HepG2 (cell line): ENCODE measurements at regions of chr5 and their contacts with region 1.

Region 1: DNA sequence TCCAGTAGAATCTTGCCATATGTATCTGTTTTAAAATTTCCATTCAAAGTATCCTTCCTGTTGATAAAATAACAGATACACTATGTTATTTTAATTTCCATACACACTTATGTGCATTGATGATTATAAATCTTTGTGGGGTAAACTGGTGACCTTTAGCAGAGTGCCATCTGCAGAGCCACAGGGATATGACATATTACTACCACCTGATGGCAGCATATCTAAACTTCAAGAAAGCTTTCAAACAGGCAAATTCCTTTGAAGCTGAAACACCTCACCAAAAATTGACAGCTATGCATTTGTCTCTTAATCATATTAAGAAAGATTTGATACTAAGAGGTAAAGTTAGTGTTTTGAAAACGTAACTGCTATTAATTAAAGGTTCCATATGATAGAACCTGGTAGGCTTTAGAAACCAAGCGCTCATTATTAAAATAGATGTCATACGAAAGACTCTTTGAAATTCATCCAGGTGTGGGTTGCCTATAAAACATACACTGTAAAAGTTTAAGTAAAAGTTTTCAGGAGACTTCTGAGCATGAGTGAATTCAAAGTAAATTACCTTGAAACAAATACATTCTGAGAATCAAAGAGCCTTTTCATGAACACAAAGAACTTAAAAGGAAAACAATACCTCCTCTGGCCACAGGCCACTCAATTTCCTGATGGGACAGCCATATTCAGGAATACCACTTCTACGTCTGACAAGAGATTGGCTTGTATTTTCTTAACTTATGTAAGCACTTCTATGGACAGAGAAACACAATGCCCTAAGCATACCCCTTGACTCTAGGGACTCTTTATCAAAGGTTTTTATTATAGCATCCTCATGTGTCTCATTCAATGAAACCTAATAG is 93.3 kb downstream of the KIAA0825 start:
- DNase-seq: peak; percentile 47
- ATAC-seq: peak; percentile 85
- H3K4me3 ChIP-seq: no peak overlapping the region
- H3K27ac ChIP-seq: no peak overlapping the region
- H3K4me1 ChIP-seq: no peaks in the 10 kb centered on the region
- H3K27me3 ChIP-seq: no peaks in the 10 kb centered on the region
- CTCF ChIP-seq: peak; percentile 72
- EP300 ChIP-seq: no peak
- POLR2A ChIP-seq: no peak
- RAD21 ChIP-seq: peak; percentile 52; the same call in 1 of the 2 replicates

Region 2: DNA sequence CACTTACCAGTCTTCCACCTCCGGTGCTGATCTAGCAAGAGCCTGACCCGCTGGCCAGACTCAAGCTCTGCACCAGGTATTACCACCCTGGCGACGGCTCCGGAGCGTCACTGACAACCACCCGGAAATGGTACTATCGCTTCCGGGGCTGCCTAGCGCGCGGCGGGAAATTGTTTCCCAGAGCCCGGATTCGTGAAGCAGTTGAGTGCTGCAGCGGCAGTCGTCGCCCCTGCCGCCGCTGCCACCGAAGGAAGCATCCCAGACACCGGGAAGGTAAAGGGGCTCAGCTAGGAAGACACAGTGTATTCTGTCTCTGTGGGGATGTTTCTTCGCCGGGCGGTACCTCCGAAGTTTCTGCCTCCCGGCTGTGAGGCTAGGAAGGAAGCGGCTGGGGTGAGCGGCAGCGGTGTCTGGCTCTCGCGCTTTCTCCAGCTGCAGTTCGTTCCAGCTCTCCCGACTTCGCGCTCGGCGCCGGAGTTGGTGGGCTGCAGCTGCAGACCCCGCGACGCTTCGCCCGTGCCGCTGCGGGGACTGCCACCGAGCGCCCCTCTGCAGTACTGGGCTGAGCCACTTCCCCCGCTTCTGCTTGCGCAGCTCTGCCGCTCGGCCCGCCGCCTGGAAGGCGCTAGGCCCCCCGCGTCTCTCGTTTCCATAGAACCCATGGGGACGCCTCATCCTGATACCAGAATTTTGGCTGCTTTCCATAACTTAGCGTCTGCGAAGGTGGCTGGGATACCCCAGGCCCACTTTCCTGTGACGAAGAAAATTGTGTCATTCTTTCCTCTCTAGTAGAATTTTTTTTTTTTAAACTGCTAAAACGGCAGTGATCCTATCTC is 93.6 kb after region 1 on chr5 and contains the starts of genes KIAA0825 and SLF1:
- CTCF ChIA-PET with region 1: no interaction called
- POLR2A ChIA-PET with region 1: no interaction called
- in situ Hi-C with region 1: no loop called
- intact Hi-C with region 1: loop called (anchors 5 kb)
- DNase-seq: peak; percentile 84
- ATAC-seq: peak; percentile 98
- H3K4me3 ChIP-seq: peak within 1 kb of the TSS; percentile 82 to 88 (median 88)
- H3K27ac ChIP-seq: peak within 1 kb of the TSS; percentile 79
- H3K4me1 ChIP-seq: peaks cover 17% of the 10 kb centered on the region
- H3K27me3 ChIP-seq: no peaks in the 10 kb centered on the region; a peak in 1 of 5 replicates
- CTCF ChIP-seq: peak; percentile 17; the same call in 1 of the 2 replicates
- EP300 ChIP-seq: no peak
- POLR2A ChIP-seq: peak; percentile 61 to 70; a peak in 2 of 4 replicates
- RAD21 ChIP-seq: no peak
- total RNA-seq, gene KIAA0825: 0.51 and 0.77 TPM in 2 replicates
- total RNA-seq, gene SLF1: 9.1 and 10.4 TPM in 2 replicates

Region 3: GRCh38 chr5:94693043-94693822 is 168.2 kb after region 1 on chr5:
- CTCF ChIA-PET with region 1: interaction called, 14 read pairs
- POLR2A ChIA-PET with region 1: no interaction called
- in situ Hi-C with region 1: no loop called
- intact Hi-C with region 1: loop called (anchors 1 kb)
- DNase-seq: peak; percentile 33
- ATAC-seq: peak; percentile 69
- H3K4me3 ChIP-seq: no peak overlapping the region
- H3K27ac ChIP-seq: no peak overlapping the region
- H3K4me1 ChIP-seq: no peaks in the 10 kb centered on the region
- H3K27me3 ChIP-seq: no peaks in the 10 kb centered on the region
- CTCF ChIP-seq: peak; percentile 38
- EP300 ChIP-seq: no peak
- POLR2A ChIP-seq: no peak
- RAD21 ChIP-seq: no peak

Region 4: GRCh38 chr5:94731471-94731870 is 206.4 kb after region 1 on chr5:
- CTCF ChIA-PET with region 1: no interaction called
- POLR2A ChIA-PET with region 1: no interaction called
- in situ Hi-C with region 1: loop called (anchors 10 kb)
- intact Hi-C with region 1: no loop called
- DNase-seq: no peak
- ATAC-seq: no peak
- H3K4me3 ChIP-seq: no peak overlapping the region
- H3K27ac ChIP-seq: no peak overlapping the region
- H3K4me1 ChIP-seq: no peaks in the 10 kb centered on the region
- H3K27me3 ChIP-seq: no peaks in the 10 kb centered on the region
- CTCF ChIP-seq: no peak
- EP300 ChIP-seq: no peak
- POLR2A ChIP-seq: no peak
- RAD21 ChIP-seq: no peak

Region 5: GRCh38 chr5:94740286-94740685 is 215.2 kb after region 1 on chr5:
- CTCF ChIA-PET with region 1: interaction called, 17 read pairs
- POLR2A ChIA-PET with region 1: no interaction called
- in situ Hi-C with region 1: loop called (anchors 10 kb)
- intact Hi-C with region 1: loop called (anchors 1 kb)
- DNase-seq: no peak
- ATAC-seq: no peak
- H3K4me3 ChIP-seq: no peak overlapping the region
- H3K27ac ChIP-seq: no peak overlapping the region
- H3K4me1 ChIP-seq: no peaks in the 10 kb centered on the region
- H3K27me3 ChIP-seq: no peaks in the 10 kb centered on the region
- CTCF ChIP-seq: no peak
- EP300 ChIP-seq: no peak
- POLR2A ChIP-seq: no peak
- RAD21 ChIP-seq: no peak

Region 6: DNA sequence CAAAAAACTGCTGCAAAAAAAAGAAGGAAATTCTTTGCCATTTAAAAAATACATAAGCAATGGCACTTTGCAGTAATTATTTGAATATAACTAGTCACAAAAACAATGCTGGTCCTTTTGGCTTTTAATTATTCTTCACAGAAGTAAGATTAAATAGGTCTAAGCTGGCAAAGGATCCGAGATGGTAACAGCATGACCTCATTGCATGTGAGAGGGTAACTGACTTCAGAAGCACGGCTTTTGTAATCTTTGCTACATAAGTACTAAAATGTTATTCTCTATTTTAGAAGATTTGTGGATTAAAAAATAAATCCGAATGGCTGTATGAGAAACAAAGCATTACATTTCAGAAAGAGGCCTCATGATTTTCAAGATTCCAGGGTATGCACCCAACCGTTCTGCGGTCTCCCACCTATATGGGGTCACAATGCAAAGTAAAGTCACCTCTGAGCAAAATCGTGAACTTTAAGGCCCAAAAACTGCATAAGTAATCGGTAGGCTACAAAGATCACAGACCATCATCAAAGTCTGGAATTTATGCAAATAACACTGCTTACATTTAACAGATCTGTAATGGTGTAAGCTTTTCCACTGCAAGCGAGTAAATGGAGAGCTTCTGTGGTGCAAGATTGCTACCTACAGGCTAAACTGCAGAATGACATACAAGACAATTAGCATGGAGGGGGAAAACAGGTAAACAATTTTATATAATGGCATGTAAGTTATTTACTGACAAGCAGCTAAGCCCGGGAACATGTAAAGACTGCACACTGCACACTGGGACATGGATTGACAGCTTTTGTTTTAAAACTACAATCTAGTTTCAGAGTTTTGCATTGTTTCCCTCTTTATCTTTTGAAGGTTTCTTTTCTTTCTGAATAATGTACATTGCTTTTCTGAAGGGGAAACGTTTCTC is 325.0 kb after region 1 on chr5:
- CTCF ChIA-PET with region 1: interaction called, 3 read pairs
- POLR2A ChIA-PET with region 1: no interaction called
- in situ Hi-C with region 1: no loop called
- intact Hi-C with region 1: loop called (anchors 2 kb)
- DNase-seq: peak; percentile 34
- ATAC-seq: peak; percentile 95
- H3K4me3 ChIP-seq: no peak overlapping the region
- H3K27ac ChIP-seq: no peak overlapping the region
- H3K4me1 ChIP-seq: no peaks in the 10 kb centered on the region
- H3K27me3 ChIP-seq: no peaks in the 10 kb centered on the region
- CTCF ChIP-seq: peak; percentile 73
- EP300 ChIP-seq: no peak
- POLR2A ChIP-seq: no peak
- RAD21 ChIP-seq: no peak